GM12878 (cell line): ENCODE measurements at regions of chr14 and their contacts with region 1.

Region 1: GRCh38 chr14:91396959-91397815 is 20.4 kb downstream of the CCDC88C start:
- DNase-seq: no peak
- ATAC-seq: peak; percentile 83
- H3K4me3 ChIP-seq: peak overlapping the region; percentile 66
- H3K27ac ChIP-seq: peak overlapping the region; percentile 67
- H3K4me1 ChIP-seq: peaks cover 64% of the 10 kb centered on the region
- H3K27me3 ChIP-seq: no peaks in the 10 kb centered on the region
- CTCF ChIP-seq: no peak
- EP300 ChIP-seq: no peak
- POLR2A ChIP-seq: peak; percentile 53; the same call in 1 of the 2 replicates
- RAD21 ChIP-seq: no peak

Region 2: DNA sequence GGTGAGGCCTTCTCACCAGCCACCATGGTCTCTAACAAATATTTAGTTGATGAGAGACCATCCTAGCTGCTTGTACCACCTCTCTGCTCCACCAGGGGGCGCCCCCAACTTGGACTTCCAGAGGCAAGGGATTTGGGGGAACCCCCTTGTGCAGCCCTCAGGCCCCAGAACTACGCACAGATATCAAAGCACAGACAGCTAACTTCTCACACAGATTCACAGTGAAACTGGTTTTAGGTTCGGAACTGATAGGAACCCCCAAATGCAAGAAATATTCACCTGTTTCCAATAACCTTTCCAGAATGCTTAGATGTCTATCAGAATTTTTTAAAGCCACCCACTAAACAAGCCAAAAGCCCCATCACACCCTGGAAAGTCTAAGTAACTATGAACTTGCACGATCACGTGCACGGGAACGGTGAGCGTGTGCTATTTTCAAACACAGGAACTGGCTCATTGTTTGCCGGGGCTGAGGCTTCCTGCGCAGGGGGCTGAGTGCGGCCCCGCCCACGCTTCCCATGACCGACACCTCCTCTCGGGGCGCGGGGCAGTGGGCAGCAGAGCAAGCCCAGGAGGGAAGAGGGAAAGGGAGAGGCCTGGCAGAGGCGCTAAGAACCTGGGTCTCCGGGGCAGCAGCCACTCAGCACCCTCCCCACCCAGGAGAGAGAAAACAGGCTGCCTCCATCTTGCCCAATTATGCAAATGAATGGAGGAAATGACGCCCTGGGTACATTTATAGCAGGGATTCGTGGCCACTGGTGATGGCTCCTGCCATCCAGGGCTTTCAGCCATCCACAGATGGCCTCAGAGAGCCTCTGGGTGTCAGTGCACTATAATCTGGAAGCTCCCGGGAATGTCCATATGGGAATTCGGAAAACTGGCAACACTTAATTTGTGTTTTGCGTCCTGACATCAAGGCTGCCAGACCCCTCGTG is 73.2 kb before region 1 on chr14:
- CTCF ChIA-PET with region 1: interaction called, 7 read pairs
- POLR2A ChIA-PET with region 1: interaction called, 5 read pairs
- RAD21 ChIA-PET with region 1: interaction called, 10 read pairs
- SMC1A ChIA-PET with region 1: interaction called, 8 read pairs
- in situ Hi-C with region 1: no loop called
- intact Hi-C with region 1: no loop called
- DNase-seq: peak; percentile 75
- ATAC-seq: peak; percentile 89
- H3K4me3 ChIP-seq: peak overlapping the region; percentile 11; the same call in 1 of the 2 replicates
- H3K27ac ChIP-seq: peak overlapping the region; percentile 87
- H3K4me1 ChIP-seq: peaks cover 39% of the 10 kb centered on the region
- H3K27me3 ChIP-seq: no peaks in the 10 kb centered on the region
- CTCF ChIP-seq: peak; percentile 95 to 97 (median 96)
- EP300 ChIP-seq: peak; percentile 29 to 30; a peak in 2 of 4 replicates
- POLR2A ChIP-seq: peak; percentile 66
- RAD21 ChIP-seq: peak; percentile 98

Region 3: GRCh38 chr14:91367173-91368171 is 29.7 kb before region 1 on chr14:
- CTCF ChIA-PET with region 1: interaction called, 3 read pairs
- POLR2A ChIA-PET with region 1: interaction called, 29 read pairs
- RAD21 ChIA-PET with region 1: interaction called, 52 read pairs
- SMC1A ChIA-PET with region 1: interaction called, 89 read pairs
- in situ Hi-C with region 1: no loop called
- intact Hi-C with region 1: no loop called
- DNase-seq: peak; percentile 82
- ATAC-seq: peak; percentile 61
- H3K4me3 ChIP-seq: peak overlapping the region; percentile 61; the same call in 1 of the 2 replicates
- H3K27ac ChIP-seq: peak overlapping the region; percentile 85
- H3K4me1 ChIP-seq: peaks cover 96% of the 10 kb centered on the region
- H3K27me3 ChIP-seq: no peaks in the 10 kb centered on the region
- CTCF ChIP-seq: no peak
- EP300 ChIP-seq: peak; percentile 93 to 98
- POLR2A ChIP-seq: peak; percentile 53; the same call in 1 of the 2 replicates
- RAD21 ChIP-seq: no peak

Region 4: GRCh38 chr14:91373591-91374254 is 23.5 kb before region 1 on chr14:
- CTCF ChIA-PET with region 1: interaction called, 28 read pairs
- POLR2A ChIA-PET with region 1: interaction called, 29 read pairs
- RAD21 ChIA-PET with region 1: interaction called, 52 read pairs
- SMC1A ChIA-PET with region 1: interaction called, 89 read pairs
- in situ Hi-C with region 1: no loop called
- intact Hi-C with region 1: no loop called
- DNase-seq: peak; percentile 80
- ATAC-seq: peak; percentile 70
- H3K4me3 ChIP-seq: peak overlapping the region; percentile 41
- H3K27ac ChIP-seq: peak overlapping the region; percentile 99
- H3K4me1 ChIP-seq: peaks cover 96% of the 10 kb centered on the region
- H3K27me3 ChIP-seq: no peaks in the 10 kb centered on the region
- CTCF ChIP-seq: no peak
- EP300 ChIP-seq: peak; percentile 92 to 96
- POLR2A ChIP-seq: no peak
- RAD21 ChIP-seq: peak; percentile 26; the same call in 1 of the 2 replicates

Region 5: DNA sequence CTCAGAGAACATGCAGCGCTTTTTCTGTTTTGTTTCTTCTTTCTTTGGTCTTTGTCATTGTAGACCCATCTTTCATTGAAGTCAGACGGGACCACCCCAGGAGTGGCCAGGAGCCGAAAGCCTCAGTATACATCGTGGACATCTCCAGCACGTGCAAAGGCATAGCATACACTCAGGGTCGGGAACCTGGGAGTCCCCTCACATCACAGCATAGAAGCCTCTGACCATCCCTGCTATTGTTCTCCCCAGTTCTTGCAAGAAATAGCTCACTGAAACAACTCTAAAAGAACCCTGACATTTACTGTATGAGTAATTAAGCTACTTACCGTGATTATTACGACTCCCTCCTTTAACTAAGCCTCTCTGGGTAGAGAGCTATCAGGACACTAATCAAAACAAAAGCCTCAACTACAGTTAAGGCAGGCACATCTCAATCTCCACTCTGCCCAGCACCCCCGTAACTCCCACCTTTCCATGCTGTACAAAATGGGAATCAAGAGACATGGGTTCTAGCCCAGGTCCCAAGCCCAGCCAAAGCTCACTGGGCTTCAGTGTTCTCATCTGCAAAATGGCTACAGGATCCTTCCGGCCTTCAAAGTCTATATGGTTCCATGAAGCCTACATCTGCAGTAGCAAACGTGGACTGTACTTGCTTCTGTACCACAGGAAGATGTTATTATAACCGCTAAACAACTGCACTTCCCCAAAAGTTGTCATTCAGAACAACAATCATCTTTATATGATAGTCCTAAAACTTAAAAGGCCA is 13.8 kb after region 1 on chr14:
- CTCF ChIA-PET with region 1: interaction called, 100 read pairs
- POLR2A ChIA-PET with region 1: interaction called, 69 read pairs
- RAD21 ChIA-PET with region 1: interaction called, 110 read pairs
- SMC1A ChIA-PET with region 1: interaction called, 131 read pairs
- in situ Hi-C with region 1: no loop called
- intact Hi-C with region 1: loop called (anchors 2 kb)
- DNase-seq: no peak
- ATAC-seq: peak; percentile 44
- H3K4me3 ChIP-seq: peak overlapping the region; percentile 62
- H3K27ac ChIP-seq: peak overlapping the region; percentile 80
- H3K4me1 ChIP-seq: peaks cover 46% of the 10 kb centered on the region
- H3K27me3 ChIP-seq: no peaks in the 10 kb centered on the region
- CTCF ChIP-seq: no peak
- EP300 ChIP-seq: no peak
- POLR2A ChIP-seq: no peak
- RAD21 ChIP-seq: no peak